B cell (primary cell): ENCODE measurements at regions of chr10 and their contacts with region 1.

Region 1: GRCh38 chr10:29998142-29998808 is 61.1 kb downstream of the JCAD start:
- DNase-seq: peak; percentile 70
- ATAC-seq: peak; percentile 70
- H3K4me3 ChIP-seq: no peak overlapping the region
- H3K4me3 Mint-ChIP-seq: no peak overlapping the region
- H3K27ac ChIP-seq: no peak overlapping the region
- H3K27ac Mint-ChIP-seq: no peak overlapping the region
- H3K4me1 ChIP-seq: no peaks in the 10 kb centered on the region
- H3K4me1 Mint-ChIP-seq: peaks cover 3% of the 10 kb centered on the region
- H3K27me3 ChIP-seq: peaks cover 0 to 10% (median 1%) of the 10 kb centered on the region in 4 experiments
- H3K27me3 Mint-ChIP-seq: peaks cover 36% of the 10 kb centered on the region
- CTCF ChIP-seq: peak; percentile 84

Region 2: GRCh38 chr10:30092151-30092790 is 94.0 kb after region 1 on chr10:
- CTCF ChIA-PET with region 1: no interaction called
- POLR2A ChIA-PET with region 1: no interaction called
- intact Hi-C with region 1: no loop called
- DNase-seq: no peak
- ATAC-seq: no peak
- H3K4me3 ChIP-seq: no peak overlapping the region
- H3K4me3 Mint-ChIP-seq: no peak overlapping the region
- H3K27ac ChIP-seq: no peak overlapping the region
- H3K27ac Mint-ChIP-seq: no peak overlapping the region
- H3K4me1 ChIP-seq: no peaks in the 10 kb centered on the region
- H3K4me1 Mint-ChIP-seq: no peaks in the 10 kb centered on the region
- H3K27me3 ChIP-seq: no peaks in the 10 kb centered on the region
- H3K27me3 Mint-ChIP-seq: no peaks in the 10 kb centered on the region
- CTCF ChIP-seq: no peak

Region 3: DNA sequence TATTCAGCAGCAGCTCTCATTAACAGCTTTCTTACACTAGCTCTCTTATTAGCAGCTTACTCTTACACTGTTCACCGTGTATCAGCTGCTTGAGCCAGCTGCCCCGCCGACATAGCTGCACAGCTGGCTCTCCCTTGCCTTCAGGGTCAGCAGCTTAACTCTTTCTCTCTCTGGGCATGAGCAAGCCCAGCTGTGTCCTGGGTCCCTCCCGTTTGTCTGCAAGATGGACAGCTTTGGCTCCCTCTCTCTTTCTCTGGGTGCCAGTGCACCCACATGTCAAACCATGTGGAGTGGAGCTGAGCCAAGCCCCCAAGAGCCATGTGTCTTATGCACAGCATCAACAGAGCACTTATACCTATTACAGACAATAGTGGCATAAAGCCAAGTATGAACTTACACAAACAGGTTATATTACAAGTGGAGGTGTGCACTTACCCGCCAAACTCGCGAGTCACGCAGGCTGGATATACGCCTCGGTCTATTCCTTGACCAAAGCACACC is 386.5 kb after region 1 on chr10:
- CTCF ChIA-PET with region 1: interaction called, 8 read pairs
- POLR2A ChIA-PET with region 1: no interaction called
- intact Hi-C with region 1: loop called (anchors 5 kb)
- DNase-seq: peak; percentile 21
- ATAC-seq: no peak
- H3K4me3 ChIP-seq: no peak overlapping the region
- H3K4me3 Mint-ChIP-seq: no peak overlapping the region
- H3K27ac ChIP-seq: no peak overlapping the region
- H3K27ac Mint-ChIP-seq: no peak overlapping the region
- H3K4me1 ChIP-seq: no peaks in the 10 kb centered on the region
- H3K4me1 Mint-ChIP-seq: no peaks in the 10 kb centered on the region
- H3K27me3 ChIP-seq: peaks cover 0 to 3% (median 0%) of the 10 kb centered on the region in 4 experiments
- H3K27me3 Mint-ChIP-seq: peaks cover 8% of the 10 kb centered on the region
- CTCF ChIP-seq: peak; percentile 58